CD4-positive, alpha-beta memory T cell (primary cell): ENCODE measurements at regions of chr19 and their contacts with region 1.

Region 1: DNA sequence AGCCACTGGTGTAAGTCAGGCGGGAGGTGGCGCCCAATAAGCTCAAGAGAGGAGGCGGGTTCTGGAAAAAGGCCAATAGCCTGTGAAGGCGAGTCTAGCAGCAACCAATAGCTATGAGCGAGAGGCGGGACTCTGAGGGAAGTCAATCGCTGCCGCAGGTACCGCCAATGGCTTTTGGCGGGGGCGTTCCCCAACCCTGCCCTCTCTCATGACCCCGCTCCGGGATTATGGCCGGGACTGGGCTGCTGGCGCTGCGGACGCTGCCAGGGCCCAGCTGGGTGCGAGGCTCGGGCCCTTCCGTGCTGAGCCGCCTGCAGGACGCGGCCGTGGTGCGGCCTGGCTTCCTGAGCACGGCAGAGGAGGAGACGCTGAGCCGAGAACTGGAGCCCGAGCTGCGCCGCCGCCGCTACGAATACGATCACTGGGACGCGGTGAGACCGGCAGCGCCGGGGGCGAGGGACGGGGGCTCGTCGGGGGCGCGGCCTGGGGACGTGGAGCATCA is at the start of gene ALKBH7:
- DNase-seq: peak; percentile 97 to 99 (median 99)
- H3K4me3 ChIP-seq: peak within 1 kb of the TSS; percentile 66 to 90
- H3K4me3 Mint-ChIP-seq: peak within 1 kb of the TSS; percentile 84 to 95 (median 92)
- H3K27ac ChIP-seq: peak within 1 kb of the TSS; percentile 92
- H3K27ac Mint-ChIP-seq: peak within 1 kb of the TSS; percentile 90 to 97 (median 95)
- H3K4me1 ChIP-seq: peaks cover 15% of the 10 kb centered on the region
- H3K4me1 Mint-ChIP-seq: peaks cover 13 to 30% (median 20%) of the 10 kb centered on the region in 4 donors
- H3K27me3 ChIP-seq: no peaks in the 10 kb centered on the region
- H3K27me3 Mint-ChIP-seq: no peaks in the 10 kb centered on the region
- total RNA-seq, gene ALKBH7: 67.4 to 73.4 TPM

Region 2: GRCh38 chr19:6110360-6110977 is 262.2 kb before region 1 on chr19 and contains the start of gene RFX2:
- CTCF ChIA-PET with region 1: no interaction called
- POLR2A ChIA-PET with region 1: no interaction called
- intact Hi-C with region 1: loop called (anchors 1 kb)
- DNase-seq: peak; percentile 99 to 100 (median 99)
- H3K4me3 ChIP-seq: peak within 1 kb of the TSS; percentile 52 to 55
- H3K4me3 Mint-ChIP-seq: peak within 1 kb of the TSS; percentile 90 to 97 (median 94)
- H3K27ac ChIP-seq: peak within 1 kb of the TSS; percentile 43
- H3K27ac Mint-ChIP-seq: peak within 1 kb of the TSS; percentile 93 to 97 (median 95)
- H3K4me1 ChIP-seq: peaks cover 27% of the 10 kb centered on the region
- H3K4me1 Mint-ChIP-seq: peaks cover 11 to 26% (median 23%) of the 10 kb centered on the region in 4 donors
- H3K27me3 ChIP-seq: peaks cover 4% of the 10 kb centered on the region
- H3K27me3 Mint-ChIP-seq: peaks cover 2 to 7% of the 10 kb centered on the region in 2 donors
- total RNA-seq, gene RFX2: 5.6 to 6.7 TPM

Region 3: GRCh38 chr19:6279931-6280591 is 92.6 kb before region 1 on chr19 and contains the start of gene MLLT1:
- CTCF ChIA-PET with region 1: interaction called, 3 read pairs
- POLR2A ChIA-PET with region 1: no interaction called
- intact Hi-C with region 1: loop called (anchors 5 kb)
- DNase-seq: peak; percentile 91 to 94 (median 93)
- H3K4me3 ChIP-seq: peak within 1 kb of the TSS; percentile 23 to 57
- H3K4me3 Mint-ChIP-seq: peak within 1 kb of the TSS; percentile 75 to 91 (median 90)
- H3K27ac ChIP-seq: peak within 1 kb of the TSS; percentile 59
- H3K27ac Mint-ChIP-seq: peak within 1 kb of the TSS; percentile 79 to 99 (median 96)
- H3K4me1 ChIP-seq: peaks cover 39% of the 10 kb centered on the region
- H3K4me1 Mint-ChIP-seq: peaks cover 29 to 45% (median 36%) of the 10 kb centered on the region in 4 donors
- H3K27me3 ChIP-seq: no peaks in the 10 kb centered on the region
- H3K27me3 Mint-ChIP-seq: peaks cover 0 to 2% of the 10 kb centered on the region in 2 donors
- total RNA-seq, gene MLLT1: 41.1 to 41.7 TPM

Region 4: GRCh38 chr19:6393074-6393983 is 20.7 kb after region 1 on chr19 and contains the start of gene GTF2F1:
- CTCF ChIA-PET with region 1: interaction called, 3 read pairs
- POLR2A ChIA-PET with region 1: interaction called, 24 read pairs
- intact Hi-C with region 1: loop called (anchors 1 kb)
- DNase-seq: peak; percentile 93 to 95 (median 94)
- H3K4me3 ChIP-seq: peak within 1 kb of the TSS; percentile 68 to 82
- H3K4me3 Mint-ChIP-seq: peak within 1 kb of the TSS; percentile 93 to 98 (median 96)
- H3K27ac ChIP-seq: peak within 1 kb of the TSS; percentile 96
- H3K27ac Mint-ChIP-seq: peak within 1 kb of the TSS; percentile 96 to 99 (median 98)
- H3K4me1 ChIP-seq: peaks cover 15% of the 10 kb centered on the region
- H3K4me1 Mint-ChIP-seq: peaks cover 17 to 30% (median 23%) of the 10 kb centered on the region in 4 donors
- H3K27me3 ChIP-seq: no peaks in the 10 kb centered on the region
- H3K27me3 Mint-ChIP-seq: no peaks in the 10 kb centered on the region
- total RNA-seq, gene GTF2F1: 56.3 to 57.7 TPM

Region 5: DNA sequence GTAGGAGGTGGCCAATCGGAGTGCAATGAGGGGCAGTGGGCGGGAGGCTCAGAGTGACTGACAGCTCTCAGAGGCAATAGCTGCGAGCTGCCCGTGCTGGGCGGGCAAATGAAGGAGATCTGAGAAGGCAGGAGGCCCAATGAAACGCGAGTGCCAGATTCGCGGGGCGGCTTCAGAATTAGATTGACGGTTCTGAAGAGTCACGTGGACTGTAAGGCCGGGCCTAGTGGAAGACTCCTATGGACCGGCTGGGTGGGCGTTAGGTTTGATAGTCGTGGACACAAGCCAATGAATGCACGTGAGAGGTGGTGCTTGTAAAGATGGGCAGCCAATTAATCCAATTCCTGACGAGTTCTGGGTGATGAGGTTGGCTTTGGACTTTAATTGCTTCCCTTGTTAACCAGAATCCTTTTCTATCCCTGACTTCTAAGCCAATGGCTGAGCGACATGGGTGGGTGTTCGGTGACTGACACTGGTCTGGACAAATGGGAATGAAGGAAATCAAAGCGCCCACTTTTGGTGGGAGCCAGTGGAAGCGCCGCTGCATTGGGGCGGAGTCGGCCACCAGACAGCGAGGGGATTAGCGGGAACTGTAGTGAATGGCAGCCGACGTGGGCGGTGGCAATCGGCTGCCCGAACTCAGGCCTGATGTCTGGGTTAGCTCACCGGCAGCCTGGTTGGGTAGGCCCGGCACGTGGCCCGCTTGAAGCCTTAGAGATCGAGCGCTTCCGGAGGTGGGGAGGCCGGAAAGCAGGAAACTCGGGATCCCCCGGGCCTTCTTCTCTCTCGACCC is 52.5 kb after region 1 on chr19:
- CTCF ChIA-PET with region 1: no interaction called
- POLR2A ChIA-PET with region 1: interaction called, 17 read pairs
- intact Hi-C with region 1: loop called (anchors 1 kb)
- DNase-seq: peak; percentile 98 to 100 (median 100)
- H3K4me3 ChIP-seq: peak overlapping the region in 1 of 2 donors; percentile 33
- H3K4me3 Mint-ChIP-seq: peak overlapping the region; percentile 70 to 88 (median 86)
- H3K27ac ChIP-seq: peak overlapping the region; percentile 62
- H3K27ac Mint-ChIP-seq: peak overlapping the region; percentile 81 to 99 (median 94)
- H3K4me1 ChIP-seq: peaks cover 42% of the 10 kb centered on the region
- H3K4me1 Mint-ChIP-seq: peaks cover 16 to 37% (median 29%) of the 10 kb centered on the region in 4 donors
- H3K27me3 ChIP-seq: no peaks in the 10 kb centered on the region
- H3K27me3 Mint-ChIP-seq: no peaks in the 10 kb centered on the region